ENCODE measurements at regions of chr10 and their contacts with region 1.

Region 1: GRCh38 chr10:27252267-27253000 is 11.8 kb upstream of the ACBD5 start:
- DNase-seq: peak; percentile 65 to 86 (median 78)
- H3K4me3 ChIP-seq: peak overlapping the region; percentile 43
- H3K4me3 Mint-ChIP-seq: peak overlapping the region; percentile 76 to 90 (median 82)
- H3K27ac ChIP-seq: peak overlapping the region; percentile 51
- H3K27ac Mint-ChIP-seq: peak overlapping the region; percentile 60 to 95 (median 85)
- H3K4me1 ChIP-seq: peaks cover 5% of the 10 kb centered on the region
- H3K4me1 Mint-ChIP-seq: peaks cover 9 to 22% (median 19%) of the 10 kb centered on the region in 3 donors
- H3K27me3 ChIP-seq: no peaks in the 10 kb centered on the region
- H3K27me3 Mint-ChIP-seq: peaks cover 3 to 4% of the 10 kb centered on the region in 2 donors

Region 2: GRCh38 chr10:27192284-27192683 is 60.1 kb before region 1 on chr10:
- CTCF ChIA-PET with region 1: no interaction called
- POLR2A ChIA-PET with region 1: no interaction called
- DNase-seq: no peak
- H3K4me3 ChIP-seq: no peak overlapping the region
- H3K4me3 Mint-ChIP-seq: no peak overlapping the region
- H3K27ac ChIP-seq: no peak overlapping the region
- H3K27ac Mint-ChIP-seq: peak overlapping the region in 2 of 8 donors; percentile 50 to 74
- H3K4me1 ChIP-seq: no peaks in the 10 kb centered on the region
- H3K4me1 Mint-ChIP-seq: no peaks in the 10 kb centered on the region
- H3K27me3 ChIP-seq: no peaks in the 10 kb centered on the region
- H3K27me3 Mint-ChIP-seq: no peaks in the 10 kb centered on the region

Region 3: GRCh38 chr10:27241652-27242472 is 10.6 kb before region 1 on chr10:
- CTCF ChIA-PET with region 1: interaction called, 30 read pairs
- POLR2A ChIA-PET with region 1: interaction called, 25 read pairs
- DNase-seq: peak; percentile 82 to 91 (median 84)
- H3K4me3 ChIP-seq: peak overlapping the region; percentile 93
- H3K4me3 Mint-ChIP-seq: peak overlapping the region; percentile 89 to 99 (median 93)
- H3K27ac ChIP-seq: peak overlapping the region; percentile 91
- H3K27ac Mint-ChIP-seq: peak overlapping the region; percentile 95 to 99 (median 97)
- H3K4me1 ChIP-seq: peaks cover 18% of the 10 kb centered on the region
- H3K4me1 Mint-ChIP-seq: peaks cover 35 to 54% (median 51%) of the 10 kb centered on the region in 3 donors
- H3K27me3 ChIP-seq: no peaks in the 10 kb centered on the region
- H3K27me3 Mint-ChIP-seq: peaks cover 0 to 4% of the 10 kb centered on the region in 2 donors